ENCODE measurements at regions of chr14 and their contacts with region 1.

Region 1: GRCh38 chr14:59189786-59190771 is 1.6 kb downstream of the DAAM1 start:
- DNase-seq: peak; percentile 69
- ATAC-seq: peak; percentile 74
- H3K4me3 ChIP-seq: peak overlapping the region; percentile 91
- H3K27ac ChIP-seq: peak overlapping the region; percentile 49
- H3K4me1 ChIP-seq: peaks cover 7% of the 10 kb centered on the region
- H3K27me3 ChIP-seq: no peaks in the 10 kb centered on the region
- CTCF ChIP-seq: peak; percentile 15 to 46 (median 34); a peak in 4 of 6 replicates
- EP300 ChIP-seq: peak in 1 of 2 experiments; percentile 50; a peak in 2 of 4 replicates
- POLR2A ChIP-seq: no peak; the same call in 1 of the 2 replicates
- RAD21 ChIP-seq: no peak

Region 2: DNA sequence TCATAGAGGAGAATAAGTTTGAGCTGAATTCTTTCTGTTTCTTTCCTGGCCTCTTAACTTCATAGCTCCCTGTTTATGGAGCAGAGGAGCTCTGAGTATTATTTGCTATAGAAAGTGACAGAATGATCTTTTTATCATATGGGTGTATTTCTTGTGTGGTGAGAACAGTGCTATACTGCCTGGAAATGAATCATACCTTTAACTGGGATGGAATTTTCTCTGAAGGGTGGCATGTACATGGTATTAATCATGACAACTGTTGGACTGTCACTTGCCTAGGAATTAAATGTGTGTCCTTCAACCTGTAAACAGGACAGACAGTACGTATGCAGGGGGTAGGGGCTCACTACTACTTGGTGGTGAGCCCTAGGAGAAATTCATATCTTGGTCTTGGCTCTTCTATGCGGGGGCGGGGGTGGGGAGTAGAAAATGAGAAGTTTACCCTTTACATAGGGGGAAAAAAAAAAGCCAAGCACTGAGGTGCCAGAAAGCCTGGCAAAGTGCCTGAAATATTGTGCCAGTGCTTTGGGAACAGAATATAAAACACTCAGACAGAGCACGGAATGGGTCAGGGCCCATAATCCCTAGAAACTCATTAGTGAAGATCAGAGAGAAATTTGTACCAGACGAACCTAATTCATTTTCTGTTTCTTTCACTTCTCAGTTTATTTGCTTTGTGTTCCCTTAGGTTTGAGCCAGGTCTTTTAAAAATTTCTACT is 1071.8 kb before region 1 on chr14:
- CTCF ChIA-PET with region 1: no interaction called
- POLR2A ChIA-PET with region 1: no interaction called
- RAD21 ChIA-PET with region 1: no interaction called
- SMC1A ChIA-PET with region 1: no interaction called
- in situ Hi-C with region 1: no loop called
- intact Hi-C with region 1: no loop called
- DNase-seq: no peak
- ATAC-seq: no peak
- H3K4me3 ChIP-seq: no peak overlapping the region
- H3K27ac ChIP-seq: no peak overlapping the region
- H3K4me1 ChIP-seq: no peaks in the 10 kb centered on the region
- H3K27me3 ChIP-seq: no peaks in the 10 kb centered on the region
- CTCF ChIP-seq: no peak
- EP300 ChIP-seq: no peak
- POLR2A ChIP-seq: no peak
- RAD21 ChIP-seq: no peak

Region 3: DNA sequence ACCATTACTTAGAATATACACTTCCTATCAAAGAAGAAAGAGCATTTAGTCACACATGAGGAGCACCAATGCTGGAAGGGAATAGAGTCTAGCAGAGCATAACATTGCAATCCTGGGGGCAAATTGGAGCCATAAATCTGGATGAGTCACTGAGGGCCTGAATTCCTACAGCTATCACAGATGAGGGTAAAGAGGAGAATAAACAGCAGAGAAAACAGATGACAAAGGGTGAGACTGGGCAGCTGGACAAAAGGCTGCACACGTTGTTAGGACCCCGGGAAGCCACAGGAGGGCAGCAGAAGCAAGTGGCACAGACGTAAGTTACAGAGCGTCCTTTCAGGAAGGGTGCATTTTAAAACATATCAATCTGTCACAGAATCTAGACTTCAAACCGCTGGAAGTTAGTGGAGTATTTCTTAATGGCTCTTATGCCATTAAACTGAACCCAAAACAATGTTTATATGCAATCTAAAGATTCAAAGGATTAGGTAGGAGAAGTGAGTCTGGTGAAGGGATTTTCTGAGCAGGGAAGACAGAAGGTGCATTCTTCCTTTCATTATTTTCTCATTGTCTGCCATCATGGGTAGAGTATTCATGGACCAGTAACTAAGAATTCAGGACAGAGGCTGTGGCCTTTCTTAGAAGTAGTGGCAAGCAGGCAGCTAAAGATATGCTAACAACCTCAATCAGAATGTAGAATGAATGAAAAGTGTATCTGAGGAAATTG is 161.4 kb before region 1 on chr14:
- CTCF ChIA-PET with region 1: no interaction called
- POLR2A ChIA-PET with region 1: no interaction called
- RAD21 ChIA-PET with region 1: no interaction called
- SMC1A ChIA-PET with region 1: no interaction called
- in situ Hi-C with region 1: no loop called
- intact Hi-C with region 1: no loop called
- DNase-seq: peak; percentile 31
- ATAC-seq: peak; percentile 100
- H3K4me3 ChIP-seq: no peak overlapping the region
- H3K27ac ChIP-seq: no peak overlapping the region
- H3K4me1 ChIP-seq: no peaks in the 10 kb centered on the region
- H3K27me3 ChIP-seq: no peaks in the 10 kb centered on the region
- CTCF ChIP-seq: peak; percentile 88 to 94 (median 91)
- EP300 ChIP-seq: no peak
- POLR2A ChIP-seq: no peak
- RAD21 ChIP-seq: peak; percentile 85

Region 4: GRCh38 chr14:59175404-59175803 is 14.7 kb before region 1 on chr14:
- CTCF ChIA-PET with region 1: interaction called, 6 read pairs
- POLR2A ChIA-PET with region 1: interaction called, 9 read pairs
- RAD21 ChIA-PET with region 1: interaction called, 9 read pairs
- SMC1A ChIA-PET with region 1: interaction called, 14 read pairs
- in situ Hi-C with region 1: no loop called
- intact Hi-C with region 1: no loop called
- DNase-seq: peak; percentile 92
- ATAC-seq: peak; percentile 99
- H3K4me3 ChIP-seq: no peak overlapping the region
- H3K27ac ChIP-seq: no peak overlapping the region; the same call in 1 of the 2 replicates
- H3K4me1 ChIP-seq: peaks cover 14% of the 10 kb centered on the region
- H3K27me3 ChIP-seq: no peaks in the 10 kb centered on the region
- CTCF ChIP-seq: no peak
- EP300 ChIP-seq: peak; percentile 74 to 91; a peak in 3 of 4 replicates
- POLR2A ChIP-seq: no peak
- RAD21 ChIP-seq: peak; percentile 29; the same call in 1 of the 2 replicates

Region 5: DNA sequence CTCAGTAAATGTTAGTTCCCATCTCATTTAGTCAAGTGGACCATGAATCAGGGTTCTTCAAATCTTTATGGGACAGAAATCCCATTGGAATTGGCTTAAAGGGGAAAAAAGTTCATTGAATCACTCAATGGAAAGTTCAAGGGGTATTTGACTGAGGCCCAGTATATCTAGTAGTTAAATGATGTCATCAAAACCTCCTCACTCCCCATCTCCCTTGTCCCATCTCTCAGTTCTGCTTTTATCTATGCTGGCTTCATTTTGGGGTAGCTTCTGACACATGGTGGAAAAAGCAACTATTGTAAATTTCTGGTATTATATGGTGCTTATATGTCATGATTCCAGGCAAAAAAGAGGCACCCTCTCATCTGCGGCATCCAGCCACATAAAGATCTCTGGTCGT is 50.3 kb after region 1 on chr14:
- CTCF ChIA-PET with region 1: interaction called, 25 read pairs
- POLR2A ChIA-PET with region 1: interaction called, 31 read pairs
- RAD21 ChIA-PET with region 1: interaction called, 22 read pairs
- SMC1A ChIA-PET with region 1: interaction called, 27 read pairs
- in situ Hi-C with region 1: no loop called
- intact Hi-C with region 1: no loop called
- DNase-seq: peak; percentile 45
- ATAC-seq: peak; percentile 87
- H3K4me3 ChIP-seq: no peak overlapping the region
- H3K27ac ChIP-seq: no peak overlapping the region
- H3K4me1 ChIP-seq: peaks cover 22% of the 10 kb centered on the region
- H3K27me3 ChIP-seq: no peaks in the 10 kb centered on the region
- CTCF ChIP-seq: no peak
- EP300 ChIP-seq: peak; percentile 61 to 82; a peak in 3 of 4 replicates
- POLR2A ChIP-seq: no peak
- RAD21 ChIP-seq: 0 out of 2 replicates have a peak, but pooled peaks have one; percentile 14

Region 6: GRCh38 chr14:59301354-59301753 is 111.3 kb after region 1 on chr14:
- CTCF ChIA-PET with region 1: interaction called, 3 read pairs
- POLR2A ChIA-PET with region 1: no interaction called
- RAD21 ChIA-PET with region 1: interaction called, 5 read pairs
- SMC1A ChIA-PET with region 1: interaction called, 17 read pairs
- in situ Hi-C with region 1: no loop called
- intact Hi-C with region 1: no loop called
- DNase-seq: peak; percentile 53
- ATAC-seq: peak; percentile 79
- H3K4me3 ChIP-seq: no peak overlapping the region
- H3K27ac ChIP-seq: no peak overlapping the region
- H3K4me1 ChIP-seq: peaks cover 6% of the 10 kb centered on the region; the same call in 1 of the 2 replicates
- H3K27me3 ChIP-seq: no peaks in the 10 kb centered on the region
- CTCF ChIP-seq: no peak
- EP300 ChIP-seq: no peak
- POLR2A ChIP-seq: no peak
- RAD21 ChIP-seq: no peak

Region 7: DNA sequence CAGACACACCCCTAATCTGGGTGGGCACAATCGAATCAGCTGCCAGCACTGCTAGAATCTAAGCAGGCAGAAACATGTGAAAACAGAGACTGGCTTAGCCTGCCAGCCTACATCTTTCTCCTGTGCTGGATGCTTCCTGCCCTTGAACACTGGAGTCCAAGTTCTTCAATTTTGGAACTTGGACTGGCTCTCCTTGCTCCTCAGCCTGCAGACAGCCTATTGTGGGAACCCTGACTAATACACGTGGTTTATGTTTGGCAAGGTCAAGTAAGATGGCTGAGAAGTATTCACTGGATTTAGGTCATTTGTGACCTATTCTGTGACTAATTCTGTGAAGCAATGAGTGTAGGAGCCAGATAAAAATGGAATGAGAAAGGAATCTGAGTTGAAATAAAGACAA is 264.1 kb after region 1 on chr14:
- CTCF ChIA-PET with region 1: no interaction called
- POLR2A ChIA-PET with region 1: no interaction called
- RAD21 ChIA-PET with region 1: no interaction called
- SMC1A ChIA-PET with region 1: no interaction called
- in situ Hi-C with region 1: no loop called
- intact Hi-C with region 1: no loop called
- DNase-seq: no peak
- ATAC-seq: no peak
- H3K4me3 ChIP-seq: no peak overlapping the region
- H3K27ac ChIP-seq: no peak overlapping the region
- H3K4me1 ChIP-seq: no peaks in the 10 kb centered on the region
- H3K27me3 ChIP-seq: no peaks in the 10 kb centered on the region
- CTCF ChIP-seq: no peak
- EP300 ChIP-seq: no peak
- POLR2A ChIP-seq: no peak
- RAD21 ChIP-seq: no peak

Region 8: DNA sequence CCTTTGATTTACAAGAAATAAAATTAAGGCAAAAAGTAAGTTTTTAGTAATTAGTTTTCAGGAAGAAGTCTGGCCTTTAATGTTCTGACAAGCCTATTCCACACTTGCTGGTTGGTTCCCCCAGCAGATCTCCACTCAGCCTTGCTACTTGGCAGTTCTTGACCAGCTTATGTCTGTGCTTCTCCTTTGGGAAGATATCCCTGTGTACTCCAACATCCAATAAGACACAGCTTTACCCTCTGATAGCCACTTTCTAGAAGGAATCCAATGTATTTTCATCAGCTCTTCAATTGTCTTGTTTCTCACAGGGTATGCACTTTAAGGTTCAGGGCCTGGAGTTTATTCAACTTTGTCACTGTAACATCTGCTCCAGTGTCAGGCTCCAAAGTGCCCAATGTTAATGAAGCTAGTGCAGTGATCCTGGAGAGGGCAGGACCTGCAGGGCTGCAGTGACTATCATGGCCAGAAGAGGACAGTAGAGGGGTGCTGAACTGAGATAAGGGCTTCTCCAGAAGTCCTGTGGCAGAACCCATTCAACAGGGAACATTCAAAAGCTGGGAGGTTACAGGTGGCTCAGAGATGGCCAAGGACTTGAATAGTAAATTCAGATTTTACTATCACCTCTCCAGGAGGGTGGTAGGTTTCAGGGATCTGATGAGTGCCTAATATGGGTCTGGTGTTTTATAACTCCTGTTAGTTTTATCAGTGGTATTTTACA is 317.1 kb after region 1 on chr14:
- CTCF ChIA-PET with region 1: no interaction called
- POLR2A ChIA-PET with region 1: no interaction called
- RAD21 ChIA-PET with region 1: no interaction called
- SMC1A ChIA-PET with region 1: no interaction called
- in situ Hi-C with region 1: no loop called
- intact Hi-C with region 1: no loop called
- DNase-seq: no peak
- ATAC-seq: peak; percentile 94
- H3K4me3 ChIP-seq: no peak overlapping the region
- H3K27ac ChIP-seq: no peak overlapping the region
- H3K4me1 ChIP-seq: no peaks in the 10 kb centered on the region
- H3K27me3 ChIP-seq: no peaks in the 10 kb centered on the region
- CTCF ChIP-seq: peak; percentile 86 to 95 (median 90)
- EP300 ChIP-seq: no peak
- POLR2A ChIP-seq: no peak
- RAD21 ChIP-seq: peak; percentile 68

Measured in GM12878 (cell line).